ENCODE measurements at regions of chr18 and their contacts with region 1.

Region 1: DNA sequence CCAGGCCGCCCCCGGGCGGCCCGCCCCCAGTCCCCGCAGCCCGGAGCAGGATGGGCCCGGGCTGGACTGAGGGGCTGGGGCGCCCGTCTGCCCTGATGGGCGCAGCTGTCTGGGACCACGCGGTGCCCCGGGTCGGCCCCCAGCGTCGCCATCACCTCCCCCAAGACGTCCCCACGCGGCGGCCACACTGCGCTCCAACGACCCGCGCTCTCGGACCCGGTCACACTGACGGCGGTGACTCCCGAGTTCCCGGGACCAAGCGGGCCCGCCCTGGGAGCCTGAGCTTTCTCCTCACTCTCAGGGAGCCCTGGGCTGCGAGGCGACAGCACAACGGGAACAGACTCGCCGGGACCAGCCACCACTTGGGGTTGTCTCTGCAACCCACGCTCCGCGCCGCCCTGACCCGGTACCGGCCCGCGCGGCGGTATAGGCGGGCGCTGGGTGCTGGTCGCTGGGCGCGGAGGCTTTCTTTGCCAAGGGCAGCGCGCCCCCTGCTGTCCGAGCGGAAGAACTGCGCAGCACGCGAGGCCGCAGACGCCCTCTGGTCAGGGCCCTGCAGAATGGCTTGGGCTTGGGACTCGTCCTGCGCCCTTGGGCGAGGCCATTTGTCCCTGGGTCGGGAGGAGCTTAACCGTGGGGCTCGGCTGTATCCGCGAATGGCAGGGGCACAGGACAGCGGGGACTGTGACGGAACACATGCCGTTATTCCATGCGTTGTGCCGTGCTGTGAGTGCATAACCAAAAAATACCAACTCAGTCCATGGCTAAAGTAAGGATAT is 54.8 kb upstream of the ANKRD62 start:
- DNase-seq: peak; percentile 68 to 88 (median 77)
- H3K4me3 ChIP-seq: peak overlapping the region; percentile 37 to 83 (median 64)
- H3K27ac ChIP-seq: peak overlapping the region in 9 of 59 donors; percentile 13 to 58 (median 43)
- H3K27me3 ChIP-seq: no peaks in the 10 kb centered on the region
- CTCF ChIP-seq: peak; percentile 90 to 100 (median 99)

Region 2: DNA sequence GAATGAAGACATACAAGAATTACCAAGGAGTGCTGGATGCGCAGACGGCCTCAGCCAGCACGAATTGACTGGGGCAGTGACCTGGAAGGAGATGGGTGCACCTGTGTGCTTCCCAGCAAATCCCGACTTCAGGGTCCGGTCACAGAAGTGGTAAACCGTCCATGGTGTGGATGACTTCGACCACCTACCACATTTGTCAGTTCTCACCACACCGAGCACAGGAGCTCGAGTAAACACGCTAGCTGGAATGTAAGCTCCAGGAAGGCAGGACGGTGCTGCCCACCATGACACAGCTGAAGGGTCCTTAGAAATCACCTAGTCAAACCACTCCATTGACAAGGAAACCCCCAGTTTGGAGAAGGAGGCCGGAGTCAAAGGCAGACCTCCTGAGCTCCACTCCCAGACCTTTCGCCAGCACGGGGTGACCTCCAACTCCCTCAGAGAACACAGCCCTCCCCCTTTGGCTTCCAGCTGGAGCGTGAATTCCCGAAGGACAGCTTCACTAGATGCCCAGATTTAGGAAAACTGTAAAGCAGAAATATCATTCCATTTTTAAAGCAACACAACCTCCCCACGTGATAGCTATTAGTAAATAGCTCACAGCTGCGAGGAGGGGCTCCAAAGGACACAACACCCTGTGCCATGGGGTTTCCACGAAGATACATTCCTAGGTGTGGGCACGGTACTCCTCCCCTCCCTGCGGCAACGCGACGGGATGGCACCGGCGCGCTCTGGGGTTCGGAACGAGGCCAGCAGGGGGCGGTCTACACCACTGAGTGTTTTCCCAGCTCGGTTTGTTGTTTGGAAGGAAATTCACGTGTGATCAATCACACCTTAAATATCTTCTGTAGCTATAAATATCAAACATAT is 383.9 kb before region 1 on chr18:
- intact Hi-C with region 1: loop called (anchors 5 to 10 kb)
- DNase-seq: peak in 9 of 10 donors; percentile 14 to 75 (median 57)
- H3K4me3 ChIP-seq: peak overlapping the region in 29 of 59 donors; percentile 2 to 41 (median 15)
- H3K27ac ChIP-seq: no peak overlapping the region
- H3K27me3 ChIP-seq: peaks cover 0 to 16% (median 0%) of the 10 kb centered on the region in 45 donors
- CTCF ChIP-seq: peak; percentile 62 to 87 (median 78)

Region 3: DNA sequence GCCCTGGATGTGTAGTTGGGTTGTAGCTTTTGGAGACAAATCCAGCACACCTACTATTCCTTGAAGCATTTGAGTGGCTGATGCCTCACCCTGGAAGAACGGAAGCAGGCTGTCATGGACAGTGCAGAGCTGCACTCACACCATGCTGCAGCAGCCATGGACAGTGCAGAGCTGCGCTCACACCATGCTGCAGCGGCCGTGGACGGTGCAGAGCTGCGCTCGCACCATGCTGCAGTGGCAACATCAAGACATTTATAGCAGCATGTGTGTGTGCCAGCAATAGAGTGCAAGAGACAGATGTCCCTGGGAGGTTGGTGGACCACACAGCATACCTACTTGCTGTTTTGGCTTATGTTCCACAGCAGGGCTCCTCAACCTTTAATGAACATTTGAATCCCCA is 319.2 kb before region 1 on chr18:
- intact Hi-C with region 1: no loop called
- DNase-seq: no peak
- H3K4me3 ChIP-seq: no peak overlapping the region
- H3K27ac ChIP-seq: no peak overlapping the region
- H3K27me3 ChIP-seq: peaks cover 0 to 5% (median 0%) of the 10 kb centered on the region in 45 donors
- CTCF ChIP-seq: no peak

Region 4: DNA sequence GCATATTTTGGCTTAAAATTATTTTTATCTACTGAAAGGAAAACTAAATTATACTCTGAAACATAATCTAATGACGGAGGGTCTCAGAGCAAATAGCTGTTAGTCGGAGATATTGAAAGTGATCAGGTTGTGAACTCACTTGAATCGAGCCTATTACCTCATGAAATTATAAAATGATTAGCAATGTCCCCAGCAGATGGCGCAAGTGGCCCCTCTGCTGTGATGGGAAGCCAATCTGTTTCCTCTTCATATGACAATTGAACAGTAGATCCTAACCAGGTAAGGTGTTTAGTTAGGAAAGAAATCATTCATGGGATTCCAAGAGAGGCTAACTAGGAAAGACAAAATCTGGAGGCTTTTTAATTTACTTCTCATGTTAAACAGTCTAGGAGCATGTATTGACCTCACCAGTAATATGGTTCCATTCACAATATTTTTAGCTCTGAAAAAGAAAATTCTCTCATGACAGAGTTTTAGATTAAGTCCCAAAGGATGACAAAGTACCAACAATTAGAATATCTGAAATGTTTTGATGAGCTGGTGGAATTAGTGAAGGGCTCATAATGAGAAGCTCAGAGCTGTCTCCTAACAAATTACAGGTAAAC is 100.9 kb before region 1 on chr18:
- intact Hi-C with region 1: loop called (anchors 2 to 5 kb)
- DNase-seq: peak; percentile 56 to 83 (median 70)
- H3K4me3 ChIP-seq: no peak overlapping the region
- H3K27ac ChIP-seq: peak overlapping the region in 1 of 59 donors; percentile 49
- H3K27me3 ChIP-seq: no peaks in the 10 kb centered on the region
- CTCF ChIP-seq: peak; percentile 72 to 97 (median 86)

Region 5: DNA sequence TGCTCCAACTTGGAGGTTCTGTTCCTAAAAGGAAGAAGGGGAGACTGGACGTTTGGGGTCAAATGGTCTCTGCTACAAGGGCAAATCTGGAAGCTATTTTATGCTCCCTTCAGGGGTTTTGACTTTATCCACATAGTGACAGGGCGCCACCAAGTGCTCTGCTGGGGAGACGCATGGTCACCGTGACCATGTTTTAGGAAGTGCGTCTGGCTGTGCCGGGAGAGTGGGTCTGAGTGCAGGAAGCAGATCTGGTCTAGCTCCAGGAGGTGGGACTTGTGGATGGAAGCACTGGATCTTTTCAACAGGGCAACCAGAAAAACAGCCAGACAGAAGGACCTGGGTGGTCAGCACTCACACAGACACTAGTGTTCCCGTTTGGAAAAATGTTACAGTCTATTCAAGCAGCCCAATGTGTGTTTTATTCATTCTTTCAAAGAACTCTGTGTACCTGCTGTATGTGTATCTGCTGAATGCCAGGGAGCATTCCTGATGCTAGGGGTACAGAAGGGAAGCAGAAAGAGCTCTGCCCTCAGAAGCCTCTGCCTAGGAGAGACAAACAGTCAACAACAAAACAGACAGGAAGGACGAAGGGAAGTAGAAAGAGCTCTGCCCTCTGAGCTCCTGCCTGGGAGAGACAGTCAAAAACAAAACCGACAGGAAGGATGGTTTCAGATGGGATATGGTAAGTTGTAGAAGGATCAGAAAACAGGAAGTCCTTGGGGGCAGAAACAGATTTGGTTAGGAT is 43.2 kb before region 1 on chr18:
- intact Hi-C with region 1: loop called in 1 of 2 experiments (anchors 5 kb)
- DNase-seq: peak in 6 of 10 donors; percentile 54 to 69 (median 61)
- H3K4me3 ChIP-seq: peak overlapping the region in 1 of 59 donors; percentile 13
- H3K27ac ChIP-seq: peak overlapping the region in 15 of 59 donors; percentile 1 to 59 (median 29)
- H3K27me3 ChIP-seq: peaks cover 0 to 3% (median 0%) of the 10 kb centered on the region in 45 donors
- CTCF ChIP-seq: peak in 54 of 56 donors; percentile 41 to 78 (median 66)

Region 6: GRCh38 chr18:12086237-12086637 is 47.4 kb after region 1 on chr18:
- intact Hi-C with region 1: no loop called
- DNase-seq: no peak
- H3K4me3 ChIP-seq: no peak overlapping the region
- H3K27ac ChIP-seq: no peak overlapping the region
- H3K27me3 ChIP-seq: no peaks in the 10 kb centered on the region
- CTCF ChIP-seq: no peak

Measured in dorsolateral prefrontal cortex (tissue), 120 donors.